Mammary epithelial cell (primary cell): ENCODE measurements at regions of chr4 and their contacts with region 1.

Region 1: DNA sequence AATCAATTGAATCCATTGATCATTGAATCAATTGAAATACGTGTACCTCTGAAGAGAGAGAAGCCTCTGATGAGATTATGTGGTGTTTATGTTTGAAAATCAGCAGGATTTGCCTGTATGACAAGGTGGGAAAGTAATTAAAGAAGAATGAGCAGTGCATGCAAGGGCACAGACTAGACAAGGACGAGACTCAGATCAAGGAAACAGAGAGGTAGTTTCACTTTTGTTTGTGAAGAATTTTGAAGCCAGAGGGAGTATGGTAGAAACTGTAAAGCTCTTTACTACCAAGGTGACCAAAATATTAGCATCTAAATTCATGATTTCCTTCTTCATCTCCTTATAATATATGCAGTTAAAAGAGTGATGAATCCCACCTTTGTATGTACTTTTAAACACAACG is 1830.0 kb upstream of the IGFBP7 start:
- DNase-seq: no peak
- H3K4me3 ChIP-seq: no peak overlapping the region
- H3K27ac ChIP-seq: no peak overlapping the region
- H3K4me1 ChIP-seq: no peaks in the 10 kb centered on the region
- H3K27me3 ChIP-seq: no peaks in the 10 kb centered on the region
- CTCF ChIP-seq: no peak

Region 2: GRCh38 chr4:59057804-59058203 is 117.6 kb after region 1 on chr4:
- CTCF ChIA-PET with region 1: no interaction called
- dilution Hi-C with region 1: no loop called
- in situ Hi-C with region 1: loop called in 1 of 2 experiments (anchors 25 kb)
- intact Hi-C with region 1: no loop called
- DNase-seq: no peak
- H3K4me3 ChIP-seq: no peak overlapping the region
- H3K27ac ChIP-seq: no peak overlapping the region
- H3K4me1 ChIP-seq: no peaks in the 10 kb centered on the region
- H3K27me3 ChIP-seq: no peaks in the 10 kb centered on the region
- CTCF ChIP-seq: no peak